ENCODE measurements at regions of chr22 and their contacts with region 1.

Region 1: DNA sequence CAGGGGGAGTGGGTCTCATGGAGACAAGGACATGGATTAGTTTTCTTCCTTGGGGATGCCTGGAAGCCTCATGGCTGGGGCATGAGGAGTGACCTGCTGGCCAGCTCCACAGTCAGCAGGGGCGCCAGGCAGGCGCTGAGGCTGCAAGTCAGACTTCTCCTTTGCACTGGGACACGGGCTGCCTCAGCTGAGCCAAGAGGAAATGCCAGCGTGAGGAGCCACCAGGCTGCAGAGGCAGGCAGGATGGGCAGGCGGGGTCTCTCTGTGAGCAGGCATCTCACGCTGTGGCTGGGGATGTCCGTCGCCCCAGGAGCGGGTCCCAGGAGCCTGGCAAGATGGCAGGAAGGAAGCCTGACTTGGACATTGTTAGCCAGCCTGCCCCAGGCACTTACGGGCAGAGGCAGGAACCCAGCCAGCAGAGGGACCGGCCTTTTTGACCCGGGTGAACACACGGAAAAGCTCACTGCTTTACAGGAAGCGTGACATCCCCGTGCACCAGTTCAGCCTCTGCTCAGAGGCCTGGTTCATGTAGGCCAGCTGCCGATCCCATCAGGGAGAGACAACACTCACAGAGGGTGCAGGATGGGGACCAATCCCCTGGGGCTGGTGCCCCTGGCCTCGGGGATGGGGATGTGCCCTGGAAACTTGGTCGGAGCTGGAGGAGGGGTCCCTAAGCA is 10.2 kb downstream of the GNB1L start:
- DNase-seq: peak; percentile 29 to 59
- ATAC-seq: peak; percentile 59 to 83 (median 66)
- H3K4me3 ChIP-seq: no peak overlapping the region
- H3K27ac ChIP-seq: peak overlapping the region in 7 of 10 donors; percentile 13 to 76 (median 39)
- H3K4me1 ChIP-seq: peaks cover 0 to 32% (median 23%) of the 10 kb centered on the region in 9 donors
- H3K27me3 ChIP-seq: no peaks in the 10 kb centered on the region
- CTCF ChIP-seq: peak in 1 of 9 donors; percentile 12

Region 2: DNA sequence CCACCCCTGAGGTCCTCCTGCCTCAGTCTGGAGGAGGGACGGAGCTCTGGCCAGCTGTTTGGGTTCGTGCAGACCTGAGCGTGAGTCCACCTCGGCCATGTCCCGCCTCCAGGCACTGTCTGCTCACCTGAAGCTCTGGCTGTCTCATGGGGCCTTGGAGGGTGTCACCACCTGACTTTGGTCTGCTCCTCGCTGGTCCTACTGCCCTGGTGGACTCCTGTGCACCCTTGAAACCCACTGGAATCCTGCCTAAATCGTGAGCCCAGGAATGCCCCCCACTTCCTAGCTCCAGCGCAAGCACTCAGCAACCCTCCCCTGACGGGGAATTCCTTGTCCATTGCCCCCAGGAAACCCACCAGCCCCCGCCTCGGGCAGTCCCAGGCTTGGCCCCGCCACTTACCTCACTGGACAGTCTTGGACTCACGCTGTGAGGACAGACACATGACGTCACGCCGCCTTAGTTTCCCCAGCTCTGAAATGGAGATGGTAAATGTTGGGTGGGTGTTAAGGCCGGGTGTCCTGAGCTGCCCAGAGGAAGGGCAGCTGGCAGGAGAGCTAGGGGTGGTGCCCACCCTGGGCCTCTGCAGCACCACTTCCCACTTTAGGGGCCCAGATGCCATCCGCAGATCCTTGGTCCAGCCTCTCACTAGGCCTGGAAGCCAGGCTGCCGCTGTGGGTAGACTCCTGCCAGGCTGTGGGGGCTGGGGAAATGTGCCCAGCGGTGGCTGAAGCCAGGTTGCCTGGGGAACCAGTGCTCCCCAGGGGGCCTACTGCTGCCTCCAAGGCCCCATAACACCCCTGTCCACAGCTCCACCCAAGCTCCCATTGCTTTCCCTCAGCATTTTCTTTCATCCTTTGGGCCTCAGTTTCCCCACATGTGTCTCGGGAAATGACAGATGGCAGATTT is 102.1 kb before region 1 on chr22:
- intact Hi-C with region 1: no loop called
- DNase-seq: no peak
- ATAC-seq: no peak
- H3K4me3 ChIP-seq: no peak overlapping the region
- H3K27ac ChIP-seq: no peak overlapping the region
- H3K4me1 ChIP-seq: peaks cover 5 to 27% (median 12%) of the 10 kb centered on the region in 9 donors
- H3K27me3 ChIP-seq: peaks cover 0 to 3% (median 0%) of the 10 kb centered on the region in 7 donors
- CTCF ChIP-seq: no peak

Region 3: GRCh38 chr22:19756288-19757128 is 88.0 kb before region 1 on chr22:
- intact Hi-C with region 1: loop called in 1 of 10 experiments (anchors 10 kb)
- DNase-seq: peak in 1 of 2 donors; percentile 59
- ATAC-seq: peak in 7 of 8 donors; percentile 21 to 54 (median 28)
- H3K4me3 ChIP-seq: peak overlapping the region in 9 of 10 donors; percentile 2 to 37 (median 17)
- H3K27ac ChIP-seq: no peak overlapping the region
- H3K4me1 ChIP-seq: peaks cover 14 to 43% (median 35%) of the 10 kb centered on the region in 9 donors
- H3K27me3 ChIP-seq: peaks cover 57 to 93% (median 83%) of the 10 kb centered on the region in 7 donors
- CTCF ChIP-seq: peak; percentile 16 to 51 (median 46)

Region 4: DNA sequence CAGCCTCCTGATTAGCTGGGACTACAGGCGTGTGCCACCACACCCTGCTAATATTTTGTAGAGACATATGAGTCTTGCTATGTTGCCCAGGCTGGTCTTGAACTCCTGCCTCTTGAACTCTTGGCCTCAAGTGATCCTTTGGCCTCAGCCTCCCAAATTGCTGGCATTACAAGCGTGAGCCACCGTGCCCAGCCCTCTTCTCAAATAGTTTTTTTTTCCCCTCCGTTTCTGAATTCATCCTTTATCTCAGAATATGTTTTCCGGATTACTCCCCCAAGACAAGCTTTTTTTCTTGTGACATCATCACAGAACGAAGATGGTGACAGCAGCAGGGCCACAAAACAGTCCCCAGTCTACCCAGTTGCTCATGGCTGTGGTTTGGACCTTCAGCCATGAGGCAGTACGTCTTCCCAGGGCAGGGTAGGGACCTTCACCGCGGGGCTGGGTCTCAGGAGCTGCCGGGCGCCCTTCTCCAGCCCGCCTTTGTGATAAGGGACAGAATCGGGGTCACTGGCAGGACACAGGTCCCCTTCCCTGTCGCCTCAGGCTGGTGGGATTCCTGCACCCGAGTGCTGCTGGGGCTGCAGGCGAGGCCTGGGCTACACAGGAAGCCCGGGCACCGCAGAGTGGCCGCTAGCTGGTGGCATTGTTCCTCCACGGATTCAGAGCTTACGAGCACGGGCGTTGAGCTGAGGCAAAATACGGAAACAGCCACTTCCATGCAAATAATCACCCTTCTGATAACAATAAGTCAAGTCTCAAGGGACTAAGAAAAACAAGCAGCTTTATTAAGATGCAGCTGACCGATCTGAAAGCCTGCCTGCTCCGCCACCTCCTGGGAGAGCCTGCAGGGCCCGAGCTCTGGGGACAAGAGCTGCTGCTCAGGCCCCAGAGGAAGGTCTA is 71.8 kb before region 1 on chr22:
- intact Hi-C with region 1: loop called in 1 of 10 experiments (anchors 10 kb)
- DNase-seq: peak in 1 of 2 donors; percentile 38
- ATAC-seq: peak in 6 of 8 donors; percentile 38 to 65 (median 54)
- H3K4me3 ChIP-seq: peak overlapping the region in 1 of 10 donors; percentile 5
- H3K27ac ChIP-seq: no peak overlapping the region
- H3K4me1 ChIP-seq: peaks cover 0 to 26% (median 15%) of the 10 kb centered on the region in 9 donors
- H3K27me3 ChIP-seq: peaks cover 32 to 84% (median 70%) of the 10 kb centered on the region in 7 donors
- CTCF ChIP-seq: peak in 4 of 9 donors; percentile 12 to 30 (median 20)

Region 5: GRCh38 chr22:19787441-19788141 is 56.9 kb before region 1 on chr22:
- intact Hi-C with region 1: no loop called
- DNase-seq: no peak
- ATAC-seq: no peak
- H3K4me3 ChIP-seq: no peak overlapping the region
- H3K27ac ChIP-seq: no peak overlapping the region
- H3K4me1 ChIP-seq: no peaks in the 10 kb centered on the region
- H3K27me3 ChIP-seq: peaks cover 0 to 18% (median 9%) of the 10 kb centered on the region in 7 donors
- CTCF ChIP-seq: no peak

Region 6: GRCh38 chr22:19877626-19878339 is 33.3 kb after region 1 on chr22:
- intact Hi-C with region 1: no loop called
- DNase-seq: no peak
- ATAC-seq: no peak
- H3K4me3 ChIP-seq: no peak overlapping the region
- H3K27ac ChIP-seq: no peak overlapping the region
- H3K4me1 ChIP-seq: peaks cover 2 to 31% (median 17%) of the 10 kb centered on the region in 9 donors
- H3K27me3 ChIP-seq: no peaks in the 10 kb centered on the region
- CTCF ChIP-seq: no peak

Region 7: GRCh38 chr22:19891317-19892256 is 47.1 kb after region 1 on chr22:
- intact Hi-C with region 1: loop called in 2 of 10 experiments (anchors 5 to 10 kb)
- DNase-seq: no peak
- ATAC-seq: peak in 6 of 8 donors; percentile 25 to 65 (median 44)
- H3K4me3 ChIP-seq: peak overlapping the region in 1 of 10 donors; percentile 8
- H3K27ac ChIP-seq: peak overlapping the region in 1 of 10 donors; percentile 77
- H3K4me1 ChIP-seq: peaks cover 0 to 42% (median 13%) of the 10 kb centered on the region in 9 donors
- H3K27me3 ChIP-seq: no peaks in the 10 kb centered on the region
- CTCF ChIP-seq: no peak

Region 8: GRCh38 chr22:19905347-19906276 is 61.1 kb after region 1 on chr22:
- intact Hi-C with region 1: no loop called
- DNase-seq: no peak
- ATAC-seq: no peak
- H3K4me3 ChIP-seq: no peak overlapping the region
- H3K27ac ChIP-seq: no peak overlapping the region
- H3K4me1 ChIP-seq: no peaks in the 10 kb centered on the region
- H3K27me3 ChIP-seq: no peaks in the 10 kb centered on the region
- CTCF ChIP-seq: no peak